Heart left ventricle (tissue), 16 donors: ENCODE measurements at regions of chr18 and their contacts with region 1.

Region 1: DNA sequence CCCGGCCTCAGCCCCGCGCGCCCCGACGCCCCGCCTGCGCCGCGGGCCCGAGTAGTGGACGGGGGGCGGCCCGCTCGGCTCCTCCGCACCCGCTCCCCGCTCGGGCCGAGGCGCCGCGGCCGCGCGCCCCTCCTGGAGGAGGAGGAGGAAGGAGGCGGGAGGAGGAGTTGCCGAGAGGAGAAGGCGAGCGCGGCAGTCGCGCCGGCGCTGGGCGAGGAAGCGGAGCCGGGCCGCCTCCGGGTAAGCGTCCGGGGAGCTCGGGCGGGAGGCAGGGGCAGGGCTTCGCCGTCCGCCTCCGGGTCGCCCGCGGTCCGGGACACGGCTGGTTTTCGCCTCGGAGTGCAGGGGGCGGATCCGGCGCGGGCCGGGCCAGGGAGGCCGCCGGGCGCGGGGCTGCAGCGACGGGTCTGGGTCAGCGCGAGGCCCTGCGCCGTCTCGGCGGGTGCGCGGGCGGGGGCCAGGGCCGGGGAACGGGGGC is at the start of gene SOCS6:
- DNase-seq: peak; percentile 67 to 86 (median 73)
- ATAC-seq: peak in 3 of 4 donors; percentile 54 to 75 (median 67)
- H3K4me3 ChIP-seq: peak within 1 kb of the TSS; percentile 47 to 97 (median 76)
- H3K27ac ChIP-seq: peak within 1 kb of the TSS; percentile 81 to 95 (median 86)
- H3K4me1 ChIP-seq: peaks cover 0 to 71% (median 41%) of the 10 kb centered on the region in 12 donors
- H3K27me3 ChIP-seq: no peaks in the 10 kb centered on the region
- CTCF ChIP-seq: no peak
- POLR2A ChIP-seq: peak in 1 of 2 donors; percentile 57
- total RNA-seq, gene SOCS6: 18.2 to 32.9 (median 21.8) TPM

Region 2: DNA sequence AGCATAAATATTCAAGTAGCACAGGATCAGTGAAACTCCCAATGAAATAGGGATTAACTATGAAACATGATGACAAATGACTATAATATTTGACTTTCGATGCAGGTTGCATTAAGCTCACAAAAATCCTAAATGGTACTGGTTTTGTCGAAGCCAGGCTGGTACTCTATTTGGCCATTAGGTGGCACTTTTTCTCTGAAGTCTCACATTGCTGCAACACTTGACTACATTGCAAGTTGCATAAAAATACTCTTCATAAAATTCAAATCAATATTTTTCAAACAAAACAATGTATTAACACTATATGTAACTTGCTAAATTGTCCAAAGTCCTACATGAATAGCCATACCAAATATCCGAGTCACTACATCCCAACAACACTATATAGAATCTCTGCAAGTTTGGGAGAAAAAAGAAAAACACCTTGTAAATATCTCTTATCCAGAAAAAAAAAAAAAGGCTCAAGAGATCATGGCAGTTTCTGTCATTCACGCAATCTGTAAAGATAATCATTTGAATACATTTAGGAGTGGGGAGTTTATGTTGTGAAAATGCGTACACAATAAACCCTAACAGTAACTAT is 92.9 kb before region 1 on chr18:
- intact Hi-C with region 1: loop called in 1 of 10 experiments (anchors 5 kb)
- DNase-seq: peak in 1 of 5 donors; percentile 10
- ATAC-seq: peak in 3 of 4 donors; percentile 57 to 82 (median 71)
- H3K4me3 ChIP-seq: no peak overlapping the region
- H3K27ac ChIP-seq: peak overlapping the region in 5 of 12 donors; percentile 24 to 48 (median 36)
- H3K4me1 ChIP-seq: peaks cover 0 to 10% (median 0%) of the 10 kb centered on the region in 12 donors
- H3K27me3 ChIP-seq: no peaks in the 10 kb centered on the region
- CTCF ChIP-seq: peak; percentile 60 to 87 (median 78)
- POLR2A ChIP-seq: no peak

Region 3: DNA sequence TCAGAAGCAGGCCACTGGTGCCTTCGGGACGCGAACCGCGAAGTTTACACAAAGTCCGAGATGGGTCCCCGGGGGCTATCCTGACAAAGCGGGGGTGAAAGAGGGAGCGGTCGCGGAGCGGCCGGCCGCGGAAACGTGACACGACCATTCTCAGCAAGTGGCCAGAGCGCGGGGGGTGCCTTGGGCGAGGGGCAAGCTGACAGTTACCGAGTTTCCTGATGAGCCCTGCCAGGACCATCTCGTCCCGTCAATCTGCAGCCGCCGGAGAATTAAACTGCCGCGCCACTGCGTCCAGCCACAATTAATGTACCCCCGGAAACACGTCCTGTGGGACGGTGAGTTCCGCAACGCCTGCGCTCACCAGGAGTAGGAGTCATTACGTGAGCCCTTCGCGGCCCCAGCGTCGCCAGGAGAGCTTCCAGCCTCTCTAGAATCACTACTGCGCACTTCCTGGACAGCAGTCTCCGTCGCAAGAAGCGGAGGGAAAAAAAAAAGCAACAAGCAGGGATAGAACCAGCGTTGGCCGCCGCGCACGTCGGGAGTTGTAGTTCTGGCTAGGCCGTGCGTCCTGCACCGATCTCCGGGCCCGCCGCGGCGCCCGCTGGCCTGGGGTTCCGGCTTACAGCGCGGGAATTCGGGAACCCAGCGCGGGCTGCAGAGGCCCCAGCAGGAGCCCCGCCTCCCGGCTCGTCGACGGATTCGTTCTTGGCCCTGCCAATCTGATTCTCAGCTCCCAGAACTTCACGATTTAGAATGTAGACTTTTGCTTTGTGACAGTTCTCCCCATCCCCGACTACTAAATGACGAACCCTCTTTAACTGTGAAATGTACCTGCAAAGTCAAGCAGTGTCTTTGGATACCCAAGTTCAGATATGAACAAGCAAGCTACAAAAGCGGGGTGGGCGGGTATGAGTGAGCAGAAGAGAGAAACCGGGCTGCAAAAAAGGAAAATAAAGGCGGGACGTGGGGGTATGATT is 83.2 kb before region 1 on chr18 and contains the start of gene RTTN:
- intact Hi-C with region 1: loop called (anchors 2 to 5 kb)
- DNase-seq: peak; percentile 94 to 97 (median 96)
- ATAC-seq: peak; percentile 99 to 100 (median 100)
- H3K4me3 ChIP-seq: peak within 1 kb of the TSS; percentile 46 to 92 (median 77)
- H3K27ac ChIP-seq: peak within 1 kb of the TSS; percentile 93 to 99 (median 97)
- H3K4me1 ChIP-seq: peaks cover 0 to 19% (median 11%) of the 10 kb centered on the region in 12 donors
- H3K27me3 ChIP-seq: no peaks in the 10 kb centered on the region
- CTCF ChIP-seq: peak in 1 of 12 donors; percentile 16
- POLR2A ChIP-seq: peak in 1 of 2 donors; percentile 17
- total RNA-seq, gene RTTN: 6.6 to 14.3 (median 8.8) TPM

Region 4: DNA sequence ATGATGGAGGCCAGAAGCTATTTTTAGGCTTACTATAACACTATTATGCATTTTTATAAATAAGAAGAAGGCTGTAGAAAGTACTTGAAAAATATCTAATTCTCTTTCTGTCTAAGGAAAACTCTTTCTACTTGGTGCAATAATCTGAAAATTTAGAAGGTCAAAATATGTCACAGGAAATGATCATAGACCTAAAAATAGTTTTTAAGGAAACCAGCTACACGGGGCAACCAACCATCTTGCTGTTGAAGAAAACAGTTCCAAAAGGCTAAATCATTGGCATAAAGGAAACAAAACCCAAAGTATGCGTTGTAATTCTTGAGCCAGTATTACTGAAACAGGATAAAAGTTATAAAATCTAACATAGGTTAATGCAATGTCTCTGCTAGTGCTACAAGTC is 40.2 kb after region 1 on chr18:
- intact Hi-C with region 1: loop called in 2 of 10 experiments (anchors 5 to 10 kb)
- DNase-seq: no peak
- ATAC-seq: no peak
- H3K4me3 ChIP-seq: no peak overlapping the region
- H3K27ac ChIP-seq: peak overlapping the region in 4 of 12 donors; percentile 8 to 26 (median 17)
- H3K4me1 ChIP-seq: peaks cover 0 to 17% (median 7%) of the 10 kb centered on the region in 12 donors
- H3K27me3 ChIP-seq: no peaks in the 10 kb centered on the region
- CTCF ChIP-seq: no peak
- POLR2A ChIP-seq: no peak

Region 5: DNA sequence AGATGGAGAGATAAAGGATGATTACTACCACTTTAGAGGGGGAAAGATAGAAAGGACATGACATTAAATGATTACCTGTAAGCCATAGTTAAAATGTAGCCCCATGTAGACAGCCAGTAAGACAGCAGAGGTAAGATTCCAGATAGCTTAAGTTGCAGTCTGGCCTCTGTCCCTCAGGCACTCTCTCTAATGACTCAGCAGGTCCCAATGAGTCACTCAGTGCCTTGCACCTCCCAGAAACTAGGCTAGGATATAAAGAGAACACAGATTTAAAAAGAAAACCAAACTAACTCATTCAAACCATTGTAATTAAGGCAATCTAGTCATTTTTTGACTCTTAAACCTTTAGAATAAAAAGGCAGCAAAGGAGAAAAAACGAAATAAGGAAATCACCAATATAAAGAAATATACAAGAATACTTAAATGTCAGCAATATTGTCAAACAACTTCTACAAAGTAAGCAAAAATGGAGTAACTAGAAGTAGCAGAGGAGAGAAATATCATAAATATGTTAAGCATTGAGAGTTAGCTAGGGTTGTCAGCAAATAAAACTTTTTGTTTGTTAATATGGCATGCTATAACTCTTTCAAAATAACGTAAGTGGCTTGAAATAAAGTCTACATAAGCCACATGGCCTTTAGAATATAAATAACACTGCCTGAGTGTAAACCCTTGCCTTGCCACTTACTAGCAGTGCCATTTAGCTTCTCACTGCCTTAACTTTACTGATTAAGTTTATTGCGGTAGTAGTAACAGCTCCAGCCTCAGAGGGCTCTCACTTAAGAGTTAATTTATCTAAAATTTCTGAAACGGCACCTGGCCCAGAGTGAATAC is 48.5 kb after region 1 on chr18:
- intact Hi-C with region 1: loop called in 2 of 10 experiments (anchors 5 to 10 kb)
- DNase-seq: peak in 2 of 5 donors; percentile 27 to 56
- ATAC-seq: peak; percentile 90 to 95 (median 93)
- H3K4me3 ChIP-seq: peak overlapping the region in 5 of 12 donors; percentile 0 to 35 (median 14)
- H3K27ac ChIP-seq: peak overlapping the region; percentile 23 to 84 (median 68)
- H3K4me1 ChIP-seq: peaks cover 0 to 8% (median 0%) of the 10 kb centered on the region in 12 donors
- H3K27me3 ChIP-seq: no peaks in the 10 kb centered on the region
- CTCF ChIP-seq: no peak
- POLR2A ChIP-seq: no peak

Region 6: GRCh38 chr18:70421471-70422390 is 132.8 kb after region 1 on chr18:
- intact Hi-C with region 1: loop called in 2 of 10 experiments (anchors 10 kb)
- DNase-seq: peak; percentile 67 to 86 (median 76)
- ATAC-seq: peak; percentile 80 to 96 (median 94)
- H3K4me3 ChIP-seq: no peak overlapping the region
- H3K27ac ChIP-seq: peak overlapping the region in 6 of 12 donors; percentile 12 to 54 (median 27)
- H3K4me1 ChIP-seq: peaks cover 5 to 48% (median 32%) of the 10 kb centered on the region in 12 donors
- H3K27me3 ChIP-seq: no peaks in the 10 kb centered on the region
- CTCF ChIP-seq: no peak
- POLR2A ChIP-seq: no peak

Region 7: GRCh38 chr18:70431203-70431624 is 142.3 kb after region 1 on chr18:
- intact Hi-C with region 1: loop called in 8 of 10 experiments (anchors 5 to 10 kb)
- DNase-seq: no peak
- ATAC-seq: no peak
- H3K4me3 ChIP-seq: no peak overlapping the region
- H3K27ac ChIP-seq: no peak overlapping the region
- H3K4me1 ChIP-seq: no peaks in the 10 kb centered on the region
- H3K27me3 ChIP-seq: no peaks in the 10 kb centered on the region
- CTCF ChIP-seq: no peak
- POLR2A ChIP-seq: no peak